Activated CD4-positive, alpha-beta T cell treated with anti-CD3 and anti-CD28 coated beads, Interleukin-2, amount 10 ng/mL, durations not matched to agents 24 days and 14 days (primary cell): ENCODE measurements at regions of chr9 and their contacts with region 1.

Region 1: DNA sequence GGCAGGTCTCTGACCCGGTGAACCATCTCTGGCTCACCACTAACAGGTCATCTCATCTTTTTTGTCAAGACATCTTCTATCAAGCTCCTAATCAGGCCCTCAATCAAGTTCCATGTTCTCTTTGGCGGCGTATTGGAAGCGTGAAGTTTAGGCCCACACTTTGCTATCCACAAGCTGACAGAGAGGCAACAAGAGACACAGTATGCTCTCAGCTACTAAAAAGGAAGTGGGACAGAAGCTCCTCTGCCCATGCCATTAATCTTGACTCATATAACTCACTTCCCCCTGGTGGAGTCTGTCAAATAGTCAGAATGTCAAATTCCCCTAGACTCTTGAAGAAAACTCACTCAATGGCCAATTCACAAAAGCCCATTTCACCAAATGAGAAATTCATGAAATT is 77.6 kb upstream of the TMC1 start:
- DNase-seq: peak; percentile 66
- H3K4me3 Mint-ChIP-seq: peak overlapping the region; percentile 33
- H3K27ac Mint-ChIP-seq: peak overlapping the region; percentile 81
- H3K4me1 Mint-ChIP-seq: peaks cover 32% of the 10 kb centered on the region
- H3K27me3 Mint-ChIP-seq: peaks cover 3% of the 10 kb centered on the region

Region 2: DNA sequence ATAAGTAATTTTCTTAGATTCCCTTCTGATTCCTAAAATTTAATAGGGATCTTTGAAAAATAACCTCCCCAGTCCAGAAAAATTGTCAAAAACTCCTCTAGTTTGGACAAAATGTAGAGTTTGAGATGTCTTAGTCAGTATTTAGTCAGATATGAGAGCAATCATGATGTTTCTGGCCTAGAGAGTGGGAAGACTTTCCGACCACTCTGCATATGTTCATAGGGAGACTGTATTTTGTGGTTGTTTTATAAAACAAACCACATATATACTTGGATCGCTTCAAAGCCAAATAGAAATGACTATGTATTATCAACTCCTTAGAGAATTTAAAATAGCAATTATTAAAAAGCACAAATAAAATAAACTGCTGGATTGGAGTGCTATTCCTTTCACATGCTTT is 94.6 kb before region 1 on chr9:
- intact Hi-C with region 1: loop called (anchors 5 kb)
- DNase-seq: no peak
- H3K4me3 Mint-ChIP-seq: no peak overlapping the region
- H3K27ac Mint-ChIP-seq: no peak overlapping the region
- H3K4me1 Mint-ChIP-seq: peaks cover 22% of the 10 kb centered on the region
- H3K27me3 Mint-ChIP-seq: no peaks in the 10 kb centered on the region

Region 3: GRCh38 chr9:72460342-72461312 is 16.8 kb after region 1 on chr9:
- intact Hi-C with region 1: loop called (anchors 2 kb)
- DNase-seq: no peak
- H3K4me3 Mint-ChIP-seq: no peak overlapping the region
- H3K27ac Mint-ChIP-seq: no peak overlapping the region
- H3K4me1 Mint-ChIP-seq: peaks cover 12% of the 10 kb centered on the region
- H3K27me3 Mint-ChIP-seq: no peaks in the 10 kb centered on the region

Region 4: DNA sequence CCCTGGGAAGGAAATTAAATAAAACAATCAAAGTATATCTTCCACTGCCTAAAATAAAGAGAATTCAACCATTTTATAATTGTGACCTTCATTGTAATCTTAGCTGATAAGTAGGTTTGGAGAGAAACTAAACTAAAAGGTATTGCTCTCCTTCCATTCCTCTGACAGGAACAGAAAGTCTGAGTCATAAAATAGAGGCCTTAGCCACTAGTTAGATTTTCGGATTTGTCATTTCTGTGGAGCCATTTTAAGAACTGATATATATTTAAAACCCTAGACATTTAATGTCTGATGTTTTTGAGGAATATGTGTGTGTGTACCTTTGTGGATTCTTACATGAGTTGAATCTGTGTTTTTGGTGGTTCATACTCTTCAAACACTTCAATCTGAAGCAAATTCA is 65.8 kb after region 1 on chr9:
- intact Hi-C with region 1: loop called (anchors 1 kb)
- DNase-seq: no peak
- H3K4me3 Mint-ChIP-seq: peak overlapping the region; percentile 64
- H3K27ac Mint-ChIP-seq: peak overlapping the region; percentile 83
- H3K4me1 Mint-ChIP-seq: peaks cover 19% of the 10 kb centered on the region
- H3K27me3 Mint-ChIP-seq: no peaks in the 10 kb centered on the region

Region 5: GRCh38 chr9:72592502-72593403 is 148.9 kb after region 1 on chr9:
- intact Hi-C with region 1: loop called (anchors 2 kb)
- DNase-seq: peak; percentile 79
- H3K4me3 Mint-ChIP-seq: no peak overlapping the region
- H3K27ac Mint-ChIP-seq: no peak overlapping the region
- H3K4me1 Mint-ChIP-seq: peaks cover 45% of the 10 kb centered on the region
- H3K27me3 Mint-ChIP-seq: peaks cover 8% of the 10 kb centered on the region

Region 6: GRCh38 chr9:73116031-73116430 is 672.2 kb after region 1 on chr9:
- intact Hi-C with region 1: no loop called
- DNase-seq: no peak
- H3K4me3 Mint-ChIP-seq: no peak overlapping the region
- H3K27ac Mint-ChIP-seq: no peak overlapping the region
- H3K4me1 Mint-ChIP-seq: peaks cover 28% of the 10 kb centered on the region
- H3K27me3 Mint-ChIP-seq: peaks cover 2% of the 10 kb centered on the region